PC-9 (cell line): ENCODE measurements at regions of chr19 and their contacts with region 1.

Region 1: GRCh38 chr19:38387550-38388348 is at the start of gene GGN:
- DNase-seq: peak; percentile 81 to 93
- H3K4me3 ChIP-seq: peak within 1 kb of the TSS; percentile 71
- H3K27ac ChIP-seq: peak within 1 kb of the TSS; percentile 36; the same call in 1 of the 2 replicates
- H3K4me1 ChIP-seq: peaks cover 8% of the 10 kb centered on the region; the same call in 1 of the 2 replicates
- H3K27me3 ChIP-seq: no peaks in the 10 kb centered on the region
- CTCF ChIP-seq: no peak
- total RNA-seq, gene GGN: 1.0 and 2.1 TPM in 2 replicates

Region 2: DNA sequence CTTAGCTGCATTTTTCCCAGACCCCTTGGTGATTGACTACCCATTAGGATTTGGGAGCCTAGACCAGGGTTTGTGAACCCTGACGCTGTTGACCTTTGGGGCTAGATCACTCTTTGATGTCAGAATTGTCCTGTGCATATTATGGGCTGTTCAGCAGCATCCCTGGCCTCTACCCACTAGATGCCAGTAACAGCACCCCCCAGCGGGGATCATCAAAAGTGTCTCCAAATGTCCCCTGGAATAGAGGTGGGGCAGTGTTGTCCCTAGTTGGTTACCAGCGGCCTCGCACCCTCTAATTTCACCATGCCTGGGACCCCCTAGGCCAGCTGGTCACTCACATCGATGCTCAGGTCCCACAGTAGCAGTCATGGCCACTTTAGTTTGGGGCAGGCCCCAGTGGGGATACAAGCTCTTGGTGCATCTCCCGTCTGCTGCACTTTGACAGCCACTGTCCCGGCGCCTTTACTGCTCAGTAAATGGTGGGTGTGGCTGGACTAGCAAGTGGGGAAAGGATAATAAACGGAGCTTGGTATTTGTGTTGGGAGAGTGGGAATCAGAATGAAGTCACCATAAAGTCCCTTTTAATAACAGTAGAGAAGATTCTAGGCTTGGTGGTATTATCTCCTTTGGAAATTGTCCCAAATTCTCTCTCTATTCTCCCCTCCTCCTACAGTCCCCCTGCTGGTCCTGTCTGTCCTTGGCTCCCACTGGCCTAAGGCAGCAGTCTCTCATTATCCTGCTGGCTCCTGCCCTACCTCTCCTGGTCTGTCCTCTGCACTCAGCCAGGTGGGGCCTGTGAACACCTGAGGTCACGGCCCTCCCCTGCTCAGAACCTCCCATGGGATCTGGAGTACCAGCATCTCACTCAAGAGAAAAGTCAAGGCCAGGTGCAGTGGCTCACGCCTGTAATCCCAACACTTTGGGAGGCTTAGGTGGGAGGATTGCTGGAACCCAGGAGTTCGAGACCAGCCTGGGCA is 400.1 kb before region 1 on chr19:
- CTCF ChIA-PET with region 1: no interaction called
- POLR2A ChIA-PET with region 1: no interaction called
- intact Hi-C with region 1: no loop called
- DNase-seq: no peak
- H3K4me3 ChIP-seq: no peak overlapping the region
- H3K27ac ChIP-seq: no peak overlapping the region
- H3K4me1 ChIP-seq: peaks cover 41% of the 10 kb centered on the region
- H3K27me3 ChIP-seq: no peaks in the 10 kb centered on the region
- CTCF ChIP-seq: peak; percentile 42

Region 3: GRCh38 chr19:38229585-38230073 is 158.1 kb before region 1 on chr19:
- CTCF ChIA-PET with region 1: no interaction called
- POLR2A ChIA-PET with region 1: no interaction called
- intact Hi-C with region 1: loop called (anchors 5 kb)
- DNase-seq: peak in 1 of 2 experiments; percentile 56
- H3K4me3 ChIP-seq: no peak overlapping the region
- H3K27ac ChIP-seq: no peak overlapping the region
- H3K4me1 ChIP-seq: 0 out of 2 replicates have a peak, but pooled peaks cover 6% of the 10 kb centered on the region
- H3K27me3 ChIP-seq: peaks cover 14% of the 10 kb centered on the region; the same call in 1 of the 2 replicates
- CTCF ChIP-seq: no peak

Region 4: GRCh38 chr19:38263689-38264485 is 123.9 kb before region 1 on chr19:
- CTCF ChIA-PET with region 1: no interaction called
- POLR2A ChIA-PET with region 1: interaction called, 34 read pairs
- intact Hi-C with region 1: no loop called
- DNase-seq: peak; percentile 97 to 99
- H3K4me3 ChIP-seq: peak overlapping the region; percentile 34; the same call in 1 of the 2 replicates
- H3K27ac ChIP-seq: peak overlapping the region; percentile 94
- H3K4me1 ChIP-seq: peaks cover 35% of the 10 kb centered on the region
- H3K27me3 ChIP-seq: no peaks in the 10 kb centered on the region
- CTCF ChIP-seq: no peak

Region 5: DNA sequence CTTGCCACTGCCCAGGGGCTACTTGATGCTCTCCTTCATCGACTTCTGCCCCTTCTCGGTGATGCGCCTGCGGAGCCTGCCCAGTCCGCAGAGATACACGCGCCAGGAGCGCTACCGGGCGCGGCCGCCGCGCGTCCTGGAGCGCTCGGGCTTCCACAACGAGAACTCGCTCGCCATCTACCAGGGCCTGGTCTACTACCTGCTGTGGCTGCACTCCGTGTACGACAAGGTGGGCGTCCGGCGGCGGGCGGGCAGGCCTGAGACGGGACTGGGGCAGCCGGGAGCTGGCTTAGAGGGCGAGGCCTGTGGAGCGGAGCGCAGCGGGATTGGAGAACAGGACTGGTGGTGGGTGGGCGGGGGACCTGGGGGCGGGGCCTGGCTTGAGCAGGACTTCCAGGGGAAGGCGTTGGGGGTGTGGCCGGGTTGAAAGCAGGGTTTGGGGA is 26.1 kb before region 1 on chr19:
- CTCF ChIA-PET with region 1: interaction called, 11 read pairs
- POLR2A ChIA-PET with region 1: interaction called, 12 read pairs
- intact Hi-C with region 1: no loop called
- DNase-seq: peak; percentile 60 to 84
- H3K4me3 ChIP-seq: peak overlapping the region; percentile 74
- H3K27ac ChIP-seq: no peak overlapping the region
- H3K4me1 ChIP-seq: peaks cover 6% of the 10 kb centered on the region; the same call in 1 of the 2 replicates
- H3K27me3 ChIP-seq: peaks cover 41% of the 10 kb centered on the region; the same call in 1 of the 2 replicates
- CTCF ChIP-seq: no peak

Region 6: DNA sequence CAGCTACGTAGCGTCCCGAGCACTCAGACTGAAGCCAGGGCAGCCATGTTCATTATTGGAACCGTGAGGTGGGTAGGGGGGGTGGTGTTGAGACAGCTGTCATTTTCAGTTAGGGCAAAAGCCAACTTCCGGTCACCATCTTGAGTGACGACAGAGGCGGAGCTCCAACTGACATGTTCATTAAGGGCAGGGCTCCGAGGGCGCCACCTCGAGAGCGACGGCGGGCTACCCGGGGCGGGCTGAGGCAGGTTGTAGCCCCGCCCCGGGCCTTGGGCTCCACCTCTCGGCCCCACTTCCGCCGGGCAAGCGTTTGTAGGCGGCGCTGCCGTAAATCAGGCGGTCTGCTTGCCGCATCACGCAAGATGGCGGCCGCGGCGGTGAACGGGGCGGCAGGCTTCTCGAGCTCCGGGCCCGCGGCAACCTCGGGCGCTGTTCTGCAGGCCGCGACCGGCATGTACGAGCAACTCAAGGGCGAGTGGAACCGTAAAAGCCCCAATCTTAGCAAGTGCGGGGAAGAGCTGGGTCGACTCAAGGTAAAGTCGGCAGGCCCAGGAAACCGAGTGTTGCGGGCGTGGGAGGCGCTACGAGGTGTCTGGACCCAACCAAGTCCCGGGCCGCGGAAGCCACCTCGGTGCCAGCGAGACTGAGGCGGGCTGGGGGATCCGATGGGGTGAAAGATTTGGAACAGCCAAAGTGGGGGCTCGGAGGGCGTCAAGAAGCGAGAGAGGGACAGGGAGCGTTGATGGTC is 13.1 kb before region 1 on chr19 and contains the start of gene PSMD8:
- CTCF ChIA-PET with region 1: interaction called, 8 read pairs
- POLR2A ChIA-PET with region 1: interaction called, 28 read pairs
- intact Hi-C with region 1: loop called (anchors 1 kb)
- DNase-seq: peak; percentile 92 to 97
- H3K4me3 ChIP-seq: peak within 1 kb of the TSS; percentile 76
- H3K27ac ChIP-seq: peak within 1 kb of the TSS; percentile 58
- H3K4me1 ChIP-seq: peaks cover 15% of the 10 kb centered on the region
- H3K27me3 ChIP-seq: no peaks in the 10 kb centered on the region
- CTCF ChIP-seq: peak; percentile 35; the same call in 1 of the 2 replicates
- total RNA-seq, gene PSMD8: 141 and 222 TPM in 2 replicates

Region 7: DNA sequence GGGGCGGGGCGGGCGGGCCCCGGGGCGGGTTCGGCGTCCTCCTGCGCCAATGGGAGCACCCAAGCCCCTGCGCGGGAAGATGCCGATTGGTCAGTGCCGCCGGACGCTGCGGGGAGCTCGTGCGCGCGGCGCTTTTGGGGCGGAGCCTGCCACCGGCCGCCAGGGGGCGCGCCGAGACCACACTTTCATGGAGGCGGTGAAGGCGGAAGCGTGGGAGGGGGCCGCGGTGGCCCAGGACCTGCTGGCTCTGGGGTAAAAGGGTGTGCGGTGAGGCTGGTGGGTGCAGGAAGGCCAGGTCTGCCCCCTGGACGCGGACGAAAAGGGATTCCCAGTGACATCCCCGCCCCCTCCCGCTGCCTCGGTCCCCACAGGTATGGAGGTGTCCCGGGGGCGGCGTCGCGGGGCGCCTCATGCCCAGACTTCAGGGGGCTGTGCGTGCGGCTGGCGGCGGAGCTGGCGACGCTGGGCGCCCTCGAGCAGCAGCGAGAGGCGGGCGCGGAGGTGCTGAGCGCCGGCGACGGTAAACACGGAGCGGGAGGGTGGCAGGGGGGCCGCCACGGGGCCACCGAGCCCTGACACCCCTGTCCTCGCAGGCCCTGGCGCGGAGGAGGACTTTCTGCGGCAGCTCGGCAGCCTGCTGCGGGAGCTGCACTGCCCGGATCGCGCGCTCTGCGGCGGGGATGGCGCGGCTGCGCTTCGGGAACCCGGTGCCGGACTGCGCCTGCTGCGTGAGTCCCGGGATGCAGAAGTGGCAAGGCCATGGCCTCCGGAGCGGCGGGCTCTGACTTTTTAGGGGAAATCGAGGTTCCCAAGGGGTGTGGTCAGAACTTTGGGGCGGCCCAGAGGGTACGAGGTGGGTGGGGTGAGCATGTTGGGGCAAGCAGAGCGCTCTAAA is 15.5 kb after region 1 on chr19 and contains the start of gene FAM98C:
- CTCF ChIA-PET with region 1: interaction called, 29 read pairs
- POLR2A ChIA-PET with region 1: interaction called, 9 read pairs
- intact Hi-C with region 1: no loop called
- DNase-seq: peak; percentile 90 to 97
- H3K4me3 ChIP-seq: peak within 1 kb of the TSS; percentile 94
- H3K27ac ChIP-seq: no peak within 1 kb of the TSS
- H3K4me1 ChIP-seq: peaks cover 8% of the 10 kb centered on the region; the same call in 1 of the 2 replicates
- H3K27me3 ChIP-seq: no peaks in the 10 kb centered on the region
- CTCF ChIP-seq: peak; percentile 94
- total RNA-seq, gene FAM98C: 15.8 and 19.5 TPM in 2 replicates

Region 8: DNA sequence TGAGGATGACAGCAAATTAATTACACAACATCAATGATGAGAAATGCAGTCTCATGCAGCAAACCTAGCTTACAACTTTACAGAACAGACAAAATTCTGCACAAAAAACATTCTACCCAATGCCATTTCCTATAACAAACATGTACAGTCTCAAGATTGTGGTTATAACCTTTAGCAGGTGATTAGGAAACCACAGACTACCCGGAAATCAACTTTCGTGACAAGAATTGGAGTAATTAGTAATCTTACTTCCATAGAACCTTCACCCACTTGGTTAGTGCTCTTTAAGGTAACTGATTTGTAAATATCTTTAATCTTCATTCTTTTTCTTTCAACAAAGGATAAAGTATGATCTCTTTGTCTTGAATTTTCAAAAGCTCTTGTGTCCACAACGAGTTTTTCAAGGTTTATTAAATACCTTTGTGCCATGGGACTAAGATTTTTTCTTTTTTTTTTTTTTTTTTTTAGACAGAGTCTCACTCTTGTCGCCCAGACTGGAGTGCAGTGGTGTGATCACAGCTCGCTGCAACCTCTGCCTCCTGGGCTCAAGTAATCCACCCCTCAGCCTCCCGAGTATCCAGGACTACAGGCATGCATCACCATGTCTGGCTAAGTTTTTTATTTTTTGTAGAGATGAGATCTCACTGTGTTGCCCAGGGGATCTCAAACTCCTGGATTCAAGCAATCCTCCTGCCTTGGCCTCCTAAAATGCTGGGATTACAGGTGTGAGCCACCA is 151.2 kb after region 1 on chr19:
- CTCF ChIA-PET with region 1: no interaction called
- POLR2A ChIA-PET with region 1: no interaction called
- intact Hi-C with region 1: no loop called
- DNase-seq: peak in 1 of 2 experiments; percentile 59
- H3K4me3 ChIP-seq: no peak overlapping the region
- H3K27ac ChIP-seq: peak overlapping the region; percentile 48
- H3K4me1 ChIP-seq: peaks cover 21% of the 10 kb centered on the region
- H3K27me3 ChIP-seq: no peaks in the 10 kb centered on the region; the same call in 1 of the 2 replicates
- CTCF ChIP-seq: no peak

Region 9: DNA sequence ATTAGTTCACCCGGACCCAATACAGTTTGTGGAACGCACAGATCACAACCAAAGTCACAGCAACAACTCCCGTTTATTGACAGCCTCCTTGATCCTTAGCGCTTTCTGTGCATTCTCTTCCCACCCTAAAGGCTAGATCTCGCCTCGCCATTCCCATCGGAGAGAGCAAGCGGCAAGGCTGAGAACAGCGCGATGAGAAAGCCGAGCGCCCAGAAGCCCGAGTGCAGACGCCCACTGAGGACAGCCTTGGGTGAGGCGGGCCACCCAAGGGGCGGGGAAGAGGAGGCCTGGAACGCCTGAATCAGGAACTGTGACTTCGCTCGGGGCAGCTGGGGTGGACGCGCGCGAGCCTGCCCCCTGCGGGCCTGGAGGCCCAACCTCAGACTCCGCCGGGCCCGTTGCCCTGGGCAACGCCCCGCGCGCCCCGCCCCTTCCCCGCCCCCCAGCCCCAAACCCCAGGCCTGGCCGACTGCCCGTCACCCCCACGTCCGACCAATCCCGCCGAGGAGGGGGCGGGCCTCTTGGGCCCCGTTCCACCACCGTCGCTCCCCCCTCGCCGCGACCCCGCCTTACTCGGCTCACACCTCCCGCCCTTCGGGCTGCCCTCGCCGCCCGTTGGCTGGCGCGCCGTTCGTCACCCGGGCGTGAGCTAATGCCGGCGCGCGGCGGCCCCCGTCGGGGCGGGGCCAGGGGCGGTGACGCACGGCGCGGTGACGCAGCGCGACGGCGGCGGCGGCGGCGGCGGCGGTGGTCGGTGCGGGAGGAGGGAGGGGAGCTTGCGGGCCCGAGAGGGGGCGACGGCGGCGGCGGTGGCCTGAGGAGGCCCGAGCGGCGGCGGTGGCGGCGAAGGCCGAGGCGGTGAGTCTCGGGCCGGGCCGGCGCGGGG is 954.2 kb after region 1 on chr19 and contains the start of gene SAMD4B:
- CTCF ChIA-PET with region 1: interaction called, 6 read pairs
- POLR2A ChIA-PET with region 1: interaction called, 25 read pairs
- intact Hi-C with region 1: no loop called
- DNase-seq: peak; percentile 87 to 99
- H3K4me3 ChIP-seq: peak within 1 kb of the TSS; percentile 89
- H3K27ac ChIP-seq: peak within 1 kb of the TSS; percentile 34
- H3K4me1 ChIP-seq: peaks cover 16% of the 10 kb centered on the region
- H3K27me3 ChIP-seq: no peaks in the 10 kb centered on the region
- CTCF ChIP-seq: peak; percentile 65
- total RNA-seq, gene SAMD4B: 152 and 163 TPM in 2 replicates